Breast epithelium (tissue), 4 donors: ENCODE measurements at regions of chr6 and their contacts with region 1.

Region 1: GRCh38 chr6:144834426-144835038 is 549.4 kb downstream of the UTRN start:
- DNase-seq: no peak
- H3K4me3 ChIP-seq: no peak overlapping the region
- H3K27ac ChIP-seq: no peak overlapping the region
- H3K4me1 ChIP-seq: no peaks in the 10 kb centered on the region
- H3K27me3 ChIP-seq: no peaks in the 10 kb centered on the region
- CTCF ChIP-seq: no peak
- POLR2A ChIP-seq: no peak

Region 2: GRCh38 chr6:143598466-143599080 is 1236.0 kb before region 1 on chr6:
- intact Hi-C with region 1: loop called (anchors 5 kb)
- DNase-seq: no peak
- H3K4me3 ChIP-seq: no peak overlapping the region
- H3K27ac ChIP-seq: peak overlapping the region in 1 of 2 donors; percentile 9
- H3K4me1 ChIP-seq: no peaks in the 10 kb centered on the region
- H3K27me3 ChIP-seq: no peaks in the 10 kb centered on the region
- CTCF ChIP-seq: no peak
- POLR2A ChIP-seq: no peak

Region 3: GRCh38 chr6:144820270-144820669 is 14.3 kb before region 1 on chr6:
- intact Hi-C with region 1: no loop called
- DNase-seq: no peak
- H3K4me3 ChIP-seq: no peak overlapping the region
- H3K27ac ChIP-seq: no peak overlapping the region
- H3K4me1 ChIP-seq: no peaks in the 10 kb centered on the region
- H3K27me3 ChIP-seq: no peaks in the 10 kb centered on the region
- CTCF ChIP-seq: no peak
- POLR2A ChIP-seq: no peak

Region 4: DNA sequence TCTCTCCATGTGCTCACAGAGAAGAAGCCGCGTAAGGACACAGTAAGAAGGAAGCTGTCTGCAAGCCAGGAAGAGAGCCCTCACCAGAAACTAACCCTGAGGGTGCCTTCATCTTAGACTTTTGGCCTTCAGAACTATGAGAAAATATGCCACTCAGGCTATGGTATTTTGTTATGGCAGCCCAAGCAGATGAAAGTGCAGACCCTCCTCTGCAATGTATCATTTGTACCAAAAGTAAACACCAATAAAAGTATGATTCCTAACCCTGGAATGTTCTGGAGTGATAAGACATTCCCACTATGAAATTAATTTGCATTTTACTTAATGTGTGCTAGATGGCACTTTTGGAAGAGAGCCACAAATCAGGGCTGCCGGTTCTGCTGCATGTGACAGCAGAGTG is 44.9 kb after region 1 on chr6:
- intact Hi-C with region 1: no loop called
- DNase-seq: no peak
- H3K4me3 ChIP-seq: no peak overlapping the region
- H3K27ac ChIP-seq: no peak overlapping the region
- H3K4me1 ChIP-seq: no peaks in the 10 kb centered on the region
- H3K27me3 ChIP-seq: no peaks in the 10 kb centered on the region
- CTCF ChIP-seq: no peak
- POLR2A ChIP-seq: no peak